MCF 10A (cell line): ENCODE measurements at regions of chr1 and their contacts with region 1.

Region 1: GRCh38 chr1:211258756-211259637 is at the start of gene RCOR3:
- DNase-seq: peak; percentile 96
- H3K4me3 Mint-ChIP-seq: peak within 1 kb of the TSS; percentile 88
- H3K27ac Mint-ChIP-seq: peak within 1 kb of the TSS; percentile 96
- H3K4me1 Mint-ChIP-seq: peaks cover 24% of the 10 kb centered on the region
- H3K27me3 Mint-ChIP-seq: no peaks in the 10 kb centered on the region
- CTCF ChIP-seq: peak; percentile 93
- total RNA-seq, gene RCOR3: 70.1 and 70.3 TPM in 2 replicates

Region 2: GRCh38 chr1:210328746-210329503 is 930.1 kb before region 1 on chr1 and contains the start of gene HHAT:
- CTCF ChIA-PET with region 1: no interaction called
- POLR2A ChIA-PET with region 1: interaction called, 11 read pairs
- intact Hi-C with region 1: no loop called
- DNase-seq: peak; percentile 95
- H3K4me3 Mint-ChIP-seq: peak within 1 kb of the TSS; percentile 81
- H3K27ac Mint-ChIP-seq: peak within 1 kb of the TSS; percentile 87
- H3K4me1 Mint-ChIP-seq: peaks cover 26% of the 10 kb centered on the region
- H3K27me3 Mint-ChIP-seq: no peaks in the 10 kb centered on the region
- CTCF ChIP-seq: no peak
- total RNA-seq, gene HHAT: 4.6 and 4.9 TPM in 2 replicates

Region 3: DNA sequence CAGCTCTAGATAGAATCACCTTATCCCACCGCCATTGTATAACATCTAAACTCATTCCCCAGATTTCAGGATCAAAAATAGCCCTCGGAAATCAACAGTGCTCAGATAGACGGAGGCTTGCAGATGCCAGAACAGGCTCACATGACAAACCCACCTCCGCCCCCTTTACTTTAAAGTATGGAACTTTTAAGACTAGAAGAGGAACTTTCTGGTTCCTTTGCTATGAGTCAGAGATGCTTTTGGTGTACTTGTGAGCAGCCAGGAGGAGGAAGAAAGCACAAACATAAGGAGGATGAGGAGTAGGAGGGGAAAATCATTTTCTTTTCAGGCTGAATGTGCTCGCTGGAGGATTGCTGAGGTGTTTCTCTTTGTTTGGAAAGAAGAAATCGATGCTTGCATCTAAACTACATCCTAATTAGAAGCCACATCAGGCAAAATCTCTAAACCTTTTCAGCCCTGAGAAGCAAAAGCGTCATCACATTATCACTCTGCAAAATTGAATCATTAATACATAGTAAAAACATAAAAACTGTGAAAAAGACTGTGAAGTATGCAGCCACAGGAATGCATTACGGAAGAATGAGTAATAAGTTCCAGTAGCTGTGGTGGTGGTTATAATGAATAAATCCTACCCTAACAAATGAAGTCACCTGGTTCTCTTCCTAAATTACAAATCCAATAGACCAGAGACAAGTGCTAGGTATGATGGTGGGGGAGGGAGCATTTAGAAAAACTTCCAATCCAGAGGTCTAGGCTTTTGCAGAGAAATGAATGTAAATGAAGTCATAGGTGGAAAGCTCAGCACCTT is 376.4 kb before region 1 on chr1:
- CTCF ChIA-PET with region 1: no interaction called
- POLR2A ChIA-PET with region 1: no interaction called
- intact Hi-C with region 1: loop called (anchors 5 kb)
- DNase-seq: peak; percentile 87
- H3K4me3 Mint-ChIP-seq: peak overlapping the region; percentile 57
- H3K27ac Mint-ChIP-seq: peak overlapping the region; percentile 46
- H3K4me1 Mint-ChIP-seq: peaks cover 31% of the 10 kb centered on the region
- H3K27me3 Mint-ChIP-seq: no peaks in the 10 kb centered on the region
- CTCF ChIP-seq: no peak

Region 4: DNA sequence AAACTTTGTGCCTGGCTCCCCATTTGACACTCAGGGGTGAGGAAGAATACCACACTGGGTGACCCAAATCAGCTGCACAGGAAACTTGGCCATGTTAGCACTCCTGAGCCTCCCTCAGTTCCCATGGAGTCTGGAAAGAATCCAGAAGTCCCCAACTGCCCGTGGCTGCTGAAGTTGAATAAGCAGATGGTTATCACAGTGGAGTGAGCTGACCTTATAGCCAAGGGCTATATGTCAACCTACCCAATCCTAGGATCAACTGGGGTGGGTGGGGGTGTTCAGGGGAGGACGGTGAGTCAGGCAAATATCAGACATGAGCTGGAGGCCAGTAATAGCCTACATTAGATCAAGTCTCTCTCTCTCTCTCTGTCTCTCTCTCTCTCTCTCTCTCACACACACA is 145.4 kb before region 1 on chr1:
- CTCF ChIA-PET with region 1: no interaction called
- POLR2A ChIA-PET with region 1: no interaction called
- intact Hi-C with region 1: no loop called
- DNase-seq: no peak
- H3K4me3 Mint-ChIP-seq: no peak overlapping the region
- H3K27ac Mint-ChIP-seq: no peak overlapping the region
- H3K4me1 Mint-ChIP-seq: peaks cover 5% of the 10 kb centered on the region
- H3K27me3 Mint-ChIP-seq: peaks cover 41% of the 10 kb centered on the region
- CTCF ChIP-seq: no peak

Region 5: GRCh38 chr1:211247921-211248320 is 11.1 kb before region 1 on chr1:
- CTCF ChIA-PET with region 1: interaction called, 9 read pairs
- POLR2A ChIA-PET with region 1: interaction called, 28 read pairs
- intact Hi-C with region 1: no loop called
- DNase-seq: no peak
- H3K4me3 Mint-ChIP-seq: no peak overlapping the region
- H3K27ac Mint-ChIP-seq: no peak overlapping the region
- H3K4me1 Mint-ChIP-seq: no peaks in the 10 kb centered on the region
- H3K27me3 Mint-ChIP-seq: no peaks in the 10 kb centered on the region
- CTCF ChIP-seq: no peak

Region 6: DNA sequence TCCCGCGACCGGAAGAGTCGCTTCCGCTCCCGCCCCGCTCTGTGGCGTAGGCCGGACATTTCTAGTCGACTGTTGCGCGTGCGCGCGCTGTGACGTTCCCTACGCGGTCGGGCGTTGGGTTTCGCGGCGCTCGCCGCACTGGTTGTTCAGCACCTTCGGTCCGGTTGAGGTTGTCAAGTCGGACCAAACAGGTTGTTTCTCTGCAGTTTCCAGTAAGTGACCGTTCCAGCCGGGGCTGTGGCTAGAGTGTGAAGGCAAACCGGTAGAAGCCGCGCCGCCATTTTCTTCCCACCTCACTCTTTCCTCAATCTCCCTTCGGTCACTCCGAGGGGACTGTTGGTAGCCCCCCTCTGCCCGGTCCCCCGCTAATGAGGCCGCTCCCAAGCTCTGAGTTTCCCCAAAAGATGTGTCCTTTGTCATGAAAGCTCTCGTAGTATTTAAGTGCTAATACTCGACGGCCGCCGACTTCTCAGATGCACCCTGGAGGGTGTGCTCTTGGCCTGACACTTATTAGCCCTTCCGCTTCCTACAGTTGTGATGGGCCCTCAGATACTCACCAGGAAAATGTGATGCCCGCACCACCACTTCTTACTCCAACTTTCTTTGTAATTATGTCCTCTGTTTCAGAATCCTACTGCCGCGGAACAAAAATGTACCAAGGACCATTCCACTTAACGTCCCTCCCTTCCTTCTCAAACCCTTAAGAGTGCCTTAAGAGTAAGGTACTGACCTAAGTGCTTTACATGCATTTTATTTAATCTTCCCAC is 123.9 kb after region 1 on chr1:
- CTCF ChIA-PET with region 1: no interaction called
- POLR2A ChIA-PET with region 1: interaction called, 11 read pairs
- intact Hi-C with region 1: no loop called
- DNase-seq: peak; percentile 99
- H3K4me3 Mint-ChIP-seq: peak overlapping the region; percentile 82
- H3K27ac Mint-ChIP-seq: peak overlapping the region; percentile 98
- H3K4me1 Mint-ChIP-seq: peaks cover 26% of the 10 kb centered on the region
- H3K27me3 Mint-ChIP-seq: no peaks in the 10 kb centered on the region
- CTCF ChIP-seq: no peak